OCI-LY7 (cell line): ENCODE measurements at regions of chr21 and their contacts with region 1.

Region 1: GRCh38 chr21:45554477-45555175 is 12.4 kb upstream of the SLC19A1 start:
- DNase-seq: peak; percentile 72
- H3K4me3 ChIP-seq: peak overlapping the region; percentile 64
- H3K27ac ChIP-seq: no peak overlapping the region
- H3K4me1 ChIP-seq: peaks cover 25% of the 10 kb centered on the region
- CTCF ChIP-seq: peak; percentile 70

Region 2: DNA sequence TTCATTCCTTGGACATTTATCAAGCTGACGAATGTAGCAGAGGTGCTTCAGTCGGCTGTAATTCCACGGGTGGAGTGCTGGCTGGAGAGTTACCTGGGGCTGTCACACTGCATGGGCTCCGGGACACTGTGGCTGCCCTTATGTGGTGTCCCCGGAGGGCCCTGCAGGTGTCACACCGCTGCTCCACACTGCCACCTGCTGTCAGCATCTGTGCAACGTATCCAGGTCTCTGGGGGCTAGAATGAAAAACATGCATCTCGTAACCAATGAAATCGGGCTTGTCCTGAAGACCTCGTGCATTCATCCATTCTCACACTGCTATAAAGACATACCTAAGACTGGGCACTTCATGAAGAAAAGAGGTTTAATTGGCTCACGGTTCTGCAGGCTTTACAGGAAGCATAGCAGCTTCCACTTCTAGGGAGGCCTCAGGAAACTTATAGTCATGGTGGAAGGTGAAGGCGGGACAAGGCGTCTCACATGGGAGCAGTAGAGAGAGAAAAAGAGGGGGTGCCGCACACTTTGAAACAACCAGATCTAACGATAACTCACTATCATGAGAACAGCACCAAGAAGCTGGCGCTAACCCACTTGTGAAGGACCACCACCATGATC is 42.2 kb after region 1 on chr21:
- CTCF ChIA-PET with region 1: interaction called, 4 read pairs
- POLR2A ChIA-PET with region 1: no interaction called
- intact Hi-C with region 1: loop called (anchors 1 kb)
- DNase-seq: peak; percentile 73
- H3K4me3 ChIP-seq: no peak overlapping the region
- H3K27ac ChIP-seq: no peak overlapping the region
- H3K4me1 ChIP-seq: peaks cover 23% of the 10 kb centered on the region
- CTCF ChIP-seq: peak; percentile 84

Region 3: GRCh38 chr21:45820171-45821091 is 265.8 kb after region 1 on chr21:
- CTCF ChIA-PET with region 1: no interaction called
- POLR2A ChIA-PET with region 1: no interaction called
- intact Hi-C with region 1: loop called (anchors 1 kb)
- DNase-seq: peak; percentile 78
- H3K4me3 ChIP-seq: no peak overlapping the region
- H3K27ac ChIP-seq: no peak overlapping the region
- H3K4me1 ChIP-seq: peaks cover 8% of the 10 kb centered on the region
- CTCF ChIP-seq: peak; percentile 83